Adrenal gland (tissue), 19 donors: ENCODE measurements at regions of chr12 and their contacts with region 1.

Region 1: DNA sequence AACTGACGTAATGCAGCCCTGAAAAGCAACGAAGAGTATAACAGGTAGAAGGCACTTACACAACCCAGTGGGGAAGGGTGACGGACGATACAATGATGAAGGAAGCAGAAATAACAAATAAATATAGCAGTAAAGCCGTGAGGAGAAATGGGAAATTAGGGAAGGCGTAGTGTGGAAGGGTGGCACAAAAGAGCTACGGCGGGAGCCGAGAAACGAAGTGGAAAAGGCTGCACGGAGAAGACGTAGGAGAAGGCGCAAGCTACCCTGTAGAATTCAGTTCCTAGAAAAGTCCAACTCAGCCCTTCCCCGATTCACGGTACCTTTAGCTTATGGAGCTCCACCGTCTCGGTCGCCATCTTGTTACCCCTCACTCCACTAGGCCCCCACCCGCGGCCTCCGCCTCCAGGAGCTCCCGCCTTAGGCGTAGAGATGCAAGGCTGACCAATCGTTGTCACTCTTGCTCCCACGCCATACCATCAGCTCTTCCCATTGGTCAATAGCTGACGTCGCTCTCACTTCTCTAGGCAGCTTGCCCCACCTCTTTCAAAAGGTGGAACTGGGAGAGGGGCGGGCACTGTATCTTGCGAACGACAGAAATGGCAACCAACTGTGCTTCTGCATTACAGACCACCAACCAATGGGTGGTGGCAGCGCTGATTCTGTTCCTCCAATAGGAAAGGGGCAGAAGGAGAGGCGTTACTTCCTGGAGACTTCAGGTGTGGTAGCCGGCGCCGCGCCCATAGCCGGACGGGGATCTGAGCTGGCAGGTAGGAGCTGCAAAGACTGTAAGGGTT is at the starts of genes ORMDL2 and SARNP:
- DNase-seq: peak; percentile 97 to 100 (median 99)
- H3K4me3 ChIP-seq: peak within 1 kb of the TSS; percentile 53 to 79 (median 61)
- H3K27ac ChIP-seq: peak within 1 kb of the TSS; percentile 74 to 92 (median 88)
- H3K4me1 ChIP-seq: peaks cover 18 to 39% of the 10 kb centered on the region in 2 donors
- H3K27me3 ChIP-seq: no peaks in the 10 kb centered on the region
- CTCF ChIP-seq: no peak
- POLR2A ChIP-seq: peak; percentile 68 to 91
- total RNA-seq, gene ORMDL2: 11.7 to 74.7 (median 26.3) TPM
- total RNA-seq, gene SARNP: 23.2 to 148 (median 56.0) TPM

Region 2: GRCh38 chr12:54993161-54993835 is 824.2 kb before region 1 on chr12:
- intact Hi-C with region 1: no loop called
- DNase-seq: peak; percentile 22 to 83 (median 37)
- H3K4me3 ChIP-seq: no peak overlapping the region
- H3K27ac ChIP-seq: no peak overlapping the region
- H3K4me1 ChIP-seq: no peaks in the 10 kb centered on the region
- H3K27me3 ChIP-seq: no peaks in the 10 kb centered on the region
- CTCF ChIP-seq: peak; percentile 85 to 96 (median 90)
- POLR2A ChIP-seq: peak in 1 of 2 donors; percentile 34

Region 3: DNA sequence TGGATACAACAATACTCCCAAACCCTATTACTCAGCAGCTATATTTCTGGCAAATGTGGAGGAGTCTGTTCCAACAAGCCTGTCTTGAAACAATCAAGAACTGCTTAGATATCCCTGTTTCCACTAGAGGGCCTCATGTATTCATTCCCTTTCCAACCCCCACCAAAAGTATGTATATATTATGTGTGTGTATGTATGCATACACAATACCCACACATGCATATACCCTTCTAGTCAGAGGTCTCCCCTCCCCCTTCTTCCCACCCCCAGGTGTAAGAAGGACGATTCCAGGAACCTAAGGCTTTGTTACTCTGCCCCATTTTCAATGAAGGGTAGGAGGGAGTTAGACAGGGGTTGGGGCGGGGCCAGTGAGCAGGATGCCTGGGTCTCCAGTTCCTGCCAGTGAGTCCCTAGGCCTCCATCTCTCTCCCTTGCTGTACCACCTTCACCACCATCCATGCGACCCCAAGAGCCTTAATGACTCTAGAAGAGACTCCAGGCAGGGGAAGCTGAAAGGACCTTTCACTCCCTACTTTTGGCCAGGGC is 113.3 kb after region 1 on chr12 and contains the start of gene DGKA:
- intact Hi-C with region 1: loop called in 1 of 2 experiments (anchors 5 kb)
- DNase-seq: peak in 2 of 7 donors; percentile 17 to 27
- H3K4me3 ChIP-seq: peak within 1 kb of the TSS in 3 of 4 donors; percentile 18 to 89 (median 86)
- H3K27ac ChIP-seq: peak within 1 kb of the TSS in 4 of 5 donors; percentile 54 to 78 (median 60)
- H3K4me1 ChIP-seq: peaks cover 32 to 56% of the 10 kb centered on the region in 2 donors
- H3K27me3 ChIP-seq: no peaks in the 10 kb centered on the region
- CTCF ChIP-seq: peak; percentile 34 to 60 (median 45)
- POLR2A ChIP-seq: no peak
- total RNA-seq, gene DGKA: 16.0 to 116 (median 31.9) TPM

Region 4: DNA sequence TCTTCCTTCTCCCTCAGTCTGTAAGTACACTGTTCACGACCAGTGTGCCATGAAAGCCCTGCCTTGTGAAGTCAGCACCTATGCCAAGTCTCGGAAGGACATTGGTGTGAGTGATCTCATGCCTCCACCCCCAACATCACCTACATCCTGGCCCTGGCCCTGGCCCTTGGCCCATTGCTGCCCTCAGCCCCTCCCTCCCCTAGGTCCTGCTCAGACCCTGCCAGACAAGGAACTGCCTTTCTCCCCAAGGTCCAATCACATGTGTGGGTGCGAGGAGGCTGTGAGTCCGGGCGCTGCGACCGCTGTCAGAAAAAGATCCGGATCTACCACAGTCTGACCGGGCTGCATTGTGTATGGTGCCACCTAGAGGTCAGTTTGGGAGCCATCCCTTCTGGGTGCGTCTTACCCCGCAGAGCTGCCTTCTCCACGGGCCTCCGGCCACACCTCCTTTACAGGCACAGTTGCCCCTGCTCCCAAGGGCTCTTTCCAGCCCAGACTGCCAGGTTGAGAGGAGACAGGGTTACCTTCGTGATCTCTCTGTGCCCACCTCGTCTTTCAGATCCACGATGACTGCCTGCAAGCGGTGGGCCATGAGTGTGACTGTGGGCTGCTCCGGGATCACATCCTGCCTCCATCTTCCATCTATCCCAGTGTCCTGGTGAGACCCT is 122.7 kb after region 1 on chr12:
- intact Hi-C with region 1: loop called in 1 of 2 experiments (anchors 5 kb)
- DNase-seq: peak; percentile 87 to 96 (median 89)
- H3K4me3 ChIP-seq: no peak overlapping the region
- H3K27ac ChIP-seq: peak overlapping the region in 2 of 5 donors; percentile 45 to 46
- H3K4me1 ChIP-seq: peaks cover 0 to 12% of the 10 kb centered on the region in 2 donors
- H3K27me3 ChIP-seq: no peaks in the 10 kb centered on the region
- CTCF ChIP-seq: peak; percentile 79 to 90 (median 86)
- POLR2A ChIP-seq: no peak